Head of caudate nucleus (tissue), 42 donors: ENCODE measurements at regions of chrX and their contacts with region 1.

Region 1: GRCh38 chrX:40188573-40189432 is 91.0 kb upstream of the BCOR start:
- DNase-seq: no peak

Region 2: DNA sequence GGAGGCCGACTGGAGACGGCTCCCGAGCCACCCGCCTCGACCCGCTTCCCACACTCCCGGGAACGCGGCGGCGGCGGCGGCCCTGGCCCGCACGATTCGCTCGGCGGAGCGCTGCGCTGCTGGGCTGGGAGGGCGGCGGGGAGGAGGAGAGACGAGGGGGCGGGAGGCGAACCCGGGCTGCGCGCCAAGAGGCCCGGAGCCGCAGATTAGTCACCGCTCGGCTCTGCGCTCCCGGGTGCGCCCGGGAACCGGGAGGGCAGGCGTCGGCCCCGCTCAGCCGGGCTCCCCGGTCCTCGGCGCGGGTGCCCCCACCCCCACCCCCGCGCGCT is 79.9 kb before region 1 on chrX:
- intact Hi-C with region 1: no loop called
- DNase-seq: peak in 39 of 42 donors; percentile 46 to 91 (median 78)

Region 3: GRCh38 chrX:40169193-40170101 is 19.4 kb before region 1 on chrX:
- intact Hi-C with region 1: no loop called
- DNase-seq: no peak

Region 4: DNA sequence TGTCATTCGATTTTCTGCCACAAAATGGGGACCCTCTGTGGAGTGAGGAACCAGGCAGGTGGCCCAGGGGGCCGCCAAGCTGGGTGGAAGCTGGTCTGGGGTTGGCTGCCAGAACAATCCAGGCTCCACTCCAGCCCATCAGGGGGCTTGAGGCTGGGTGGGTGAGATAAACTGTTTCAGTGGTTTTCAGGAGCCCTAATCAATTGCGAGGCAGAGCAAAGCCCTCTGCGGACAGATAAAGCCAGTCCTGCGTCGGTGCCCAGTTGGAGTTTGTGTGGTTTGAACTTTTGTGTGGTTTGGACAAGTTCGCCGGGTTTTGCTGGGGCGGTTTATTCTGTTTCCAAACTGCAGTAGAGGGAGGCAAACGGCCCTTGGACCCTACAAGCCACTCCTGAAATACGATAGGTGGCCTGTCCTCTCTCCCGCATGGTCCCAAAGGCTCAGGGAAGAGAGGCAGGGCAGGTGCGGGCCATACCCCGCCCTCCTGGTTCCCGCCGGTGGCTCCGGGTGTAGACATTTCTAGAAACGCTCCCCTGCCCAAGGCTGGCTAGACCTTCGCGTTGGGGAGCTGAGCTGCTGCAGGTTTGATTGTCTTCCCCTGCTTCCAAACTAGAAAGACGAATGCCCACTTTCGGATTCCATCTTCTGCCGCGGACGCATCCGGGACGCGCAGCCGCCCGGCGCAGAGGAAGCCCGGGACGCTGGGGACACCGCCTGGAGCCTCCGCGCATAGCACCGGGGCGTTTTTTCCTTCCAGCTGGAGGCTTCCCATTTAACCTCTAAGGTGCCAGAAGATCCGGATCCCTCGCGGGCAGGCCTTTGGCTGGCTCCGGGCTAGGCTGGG is 77.9 kb after region 1 on chrX:
- intact Hi-C with region 1: loop called (anchors 10 kb)
- DNase-seq: peak; percentile 36 to 87 (median 71)